ENCODE measurements at regions of chr14 and their contacts with region 1.

Region 1: GRCh38 chr14:22556990-22557623 is 31.9 kb downstream of the DAD1 start:
- DNase-seq: peak; percentile 96
- ATAC-seq: peak; percentile 10
- H3K4me3 Mint-ChIP-seq: peak overlapping the region; percentile 76
- H3K27ac Mint-ChIP-seq: peak overlapping the region; percentile 100
- H3K4me1 Mint-ChIP-seq: peaks cover 86% of the 10 kb centered on the region
- H3K27me3 Mint-ChIP-seq: no peaks in the 10 kb centered on the region

Region 2: DNA sequence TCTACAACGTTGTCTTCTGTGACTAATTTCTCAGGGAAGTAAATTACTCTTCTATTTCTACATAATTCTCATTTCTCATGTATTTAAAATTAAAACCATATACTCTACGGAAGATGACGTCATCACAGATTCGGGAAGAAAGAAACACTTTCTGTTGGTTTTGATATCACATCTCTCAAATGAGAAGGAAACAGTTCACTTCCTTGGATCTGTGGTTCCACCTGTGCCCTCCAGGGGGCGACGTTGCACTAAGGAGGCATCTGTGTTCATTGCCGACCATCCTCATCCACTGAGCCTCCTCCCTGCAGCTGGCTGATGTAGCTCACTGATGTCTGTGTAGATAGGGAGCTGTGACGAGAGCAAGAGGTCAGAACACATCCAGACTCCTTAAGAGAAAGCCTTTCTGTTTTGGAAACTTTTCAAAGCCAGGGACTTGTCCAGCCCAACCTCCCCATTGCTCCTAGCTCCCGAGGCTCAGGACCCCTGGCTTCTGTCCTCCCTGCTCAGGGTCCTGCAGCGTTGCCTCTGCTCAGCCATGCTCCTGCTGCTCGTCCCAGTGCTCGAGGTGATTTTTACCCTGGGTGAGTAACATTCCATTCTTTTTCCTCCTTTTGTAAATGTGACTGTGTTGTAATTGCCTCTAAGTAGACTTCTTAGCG is 710.8 kb before region 1 on chr14:
- CTCF ChIA-PET with region 1: interaction called, 4 read pairs
- POLR2A ChIA-PET with region 1: interaction called, 4 read pairs
- intact Hi-C with region 1: loop called (anchors 1 to 2 kb)
- DNase-seq: peak; percentile 86
- ATAC-seq: peak; percentile 81
- H3K4me3 Mint-ChIP-seq: peak overlapping the region; percentile 84
- H3K27ac Mint-ChIP-seq: peak overlapping the region; percentile 87
- H3K4me1 Mint-ChIP-seq: peaks cover 12% of the 10 kb centered on the region
- H3K27me3 Mint-ChIP-seq: peaks cover 13% of the 10 kb centered on the region

Region 3: GRCh38 chr14:21997300-21997699 is 559.8 kb before region 1 on chr14:
- CTCF ChIA-PET with region 1: interaction called, 5 read pairs
- POLR2A ChIA-PET with region 1: interaction called, 6 read pairs
- intact Hi-C with region 1: loop called in 1 of 2 experiments (anchors 10 kb)
- DNase-seq: peak; percentile 54
- ATAC-seq: peak; percentile 93
- H3K4me3 Mint-ChIP-seq: peak overlapping the region; percentile 85
- H3K27ac Mint-ChIP-seq: peak overlapping the region; percentile 96
- H3K4me1 Mint-ChIP-seq: peaks cover 27% of the 10 kb centered on the region
- H3K27me3 Mint-ChIP-seq: no peaks in the 10 kb centered on the region

Region 4: DNA sequence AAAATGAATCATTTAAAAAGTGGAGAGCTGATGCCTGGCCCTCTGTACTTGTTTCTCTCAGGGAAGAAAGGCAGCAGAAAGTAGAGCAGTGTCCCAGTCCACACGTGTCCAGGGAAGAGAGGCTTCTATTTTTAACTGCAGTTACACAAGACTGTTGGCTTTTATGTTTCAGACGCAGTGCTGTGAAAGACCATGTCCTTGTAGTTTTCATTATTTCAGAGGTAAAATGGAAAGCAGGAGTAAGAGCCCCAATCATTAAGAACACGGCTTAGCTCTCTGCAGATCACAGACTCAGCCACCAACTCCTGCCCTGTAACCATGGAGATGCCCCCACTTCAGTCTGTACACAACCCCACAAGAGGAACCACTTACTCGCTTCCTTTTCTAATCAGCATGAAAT is 304.4 kb before region 1 on chr14:
- CTCF ChIA-PET with region 1: no interaction called
- POLR2A ChIA-PET with region 1: no interaction called
- intact Hi-C with region 1: no loop called
- DNase-seq: no peak
- ATAC-seq: no peak
- H3K4me3 Mint-ChIP-seq: no peak overlapping the region
- H3K27ac Mint-ChIP-seq: no peak overlapping the region
- H3K4me1 Mint-ChIP-seq: no peaks in the 10 kb centered on the region
- H3K27me3 Mint-ChIP-seq: no peaks in the 10 kb centered on the region

Region 5: DNA sequence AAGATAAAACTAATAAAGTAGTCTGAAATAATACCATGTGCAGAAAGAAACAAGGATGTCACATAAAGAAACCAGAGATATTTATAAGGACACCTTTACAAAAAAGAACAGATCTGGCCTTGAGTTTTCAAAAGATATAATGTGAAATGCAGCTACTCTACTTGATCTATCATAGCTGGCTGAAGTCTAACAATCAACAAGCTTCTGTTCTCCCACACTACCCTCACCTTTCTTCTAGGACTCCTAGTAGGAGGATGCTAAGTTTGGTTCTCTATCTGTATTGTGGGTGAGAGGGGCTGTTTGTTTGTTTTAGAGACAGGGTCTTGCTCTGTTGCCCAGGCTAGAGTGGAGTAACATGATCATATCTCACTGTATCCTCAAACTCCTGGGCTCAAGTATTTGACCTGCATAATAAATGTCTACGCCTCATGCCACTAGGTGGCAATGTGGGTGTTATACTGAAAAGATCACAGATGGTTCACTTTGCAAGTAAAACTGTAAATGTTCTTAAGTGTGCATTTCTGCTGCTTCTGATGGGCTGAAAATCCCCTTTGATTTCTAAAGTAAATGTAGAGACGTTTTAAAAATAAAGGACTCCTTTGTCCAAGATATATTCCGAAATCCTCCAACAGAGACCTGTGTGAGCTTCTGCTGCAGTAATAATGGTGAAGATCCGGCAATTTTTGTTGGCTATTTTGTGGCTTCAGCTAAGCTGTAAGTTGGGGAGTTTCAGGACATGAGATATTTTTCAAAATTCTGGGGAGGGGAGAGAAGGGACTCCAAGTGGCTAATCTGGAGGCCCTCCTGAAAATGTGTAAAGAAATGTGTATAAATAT is 237.4 kb before region 1 on chr14:
- CTCF ChIA-PET with region 1: no interaction called
- POLR2A ChIA-PET with region 1: no interaction called
- intact Hi-C with region 1: loop called (anchors 5 to 10 kb)
- DNase-seq: peak; percentile 11
- ATAC-seq: peak; percentile 19
- H3K4me3 Mint-ChIP-seq: peak overlapping the region; percentile 63
- H3K27ac Mint-ChIP-seq: peak overlapping the region; percentile 74
- H3K4me1 Mint-ChIP-seq: no peaks in the 10 kb centered on the region
- H3K27me3 Mint-ChIP-seq: no peaks in the 10 kb centered on the region

Region 6: DNA sequence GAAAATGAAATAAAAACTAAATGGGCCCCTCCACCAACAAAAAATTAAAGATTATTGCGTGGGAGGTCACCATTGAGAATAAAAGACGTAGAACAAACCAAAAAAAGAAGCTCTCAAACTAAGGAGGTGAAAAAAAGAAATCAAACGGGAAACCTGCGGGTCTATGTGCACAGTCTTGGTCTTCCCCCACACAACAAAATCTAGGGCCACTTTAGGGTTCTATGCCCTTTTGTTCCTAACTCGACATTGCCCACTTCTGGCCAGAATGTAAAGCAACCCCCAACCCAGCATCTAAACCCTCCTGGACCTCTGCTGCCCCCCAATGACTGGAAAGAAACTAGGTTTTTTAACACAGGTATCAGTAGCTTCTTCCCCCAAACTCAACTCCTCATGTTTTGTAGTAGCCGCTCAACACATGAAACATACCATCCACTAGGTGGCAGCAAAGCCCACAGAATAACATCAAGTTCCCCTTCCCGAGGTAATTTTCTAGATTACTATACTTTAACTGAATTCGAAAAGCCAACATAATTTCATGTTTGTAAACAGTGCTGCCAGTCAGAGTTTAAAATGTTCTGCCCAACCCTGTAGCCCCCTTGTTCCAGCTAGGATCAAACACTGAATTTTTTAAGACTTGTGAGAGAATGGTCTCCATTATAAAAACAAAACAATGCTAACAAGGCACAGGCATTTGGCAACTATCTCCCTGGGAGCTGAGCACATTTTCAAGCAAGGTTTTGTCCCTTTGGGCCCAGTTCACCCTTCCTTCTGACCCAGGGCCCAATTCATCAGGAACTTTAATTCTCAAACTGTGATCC is 13.2 kb after region 1 on chr14:
- CTCF ChIA-PET with region 1: interaction called, 195 read pairs
- POLR2A ChIA-PET with region 1: interaction called, 34 read pairs
- intact Hi-C with region 1: loop called (anchors 1 kb)
- DNase-seq: peak; percentile 89
- ATAC-seq: peak; percentile 80
- H3K4me3 Mint-ChIP-seq: peak overlapping the region; percentile 90
- H3K27ac Mint-ChIP-seq: peak overlapping the region; percentile 100
- H3K4me1 Mint-ChIP-seq: peaks cover 79% of the 10 kb centered on the region
- H3K27me3 Mint-ChIP-seq: no peaks in the 10 kb centered on the region

Region 7: GRCh38 chr14:22822571-22823098 is 265.5 kb after region 1 on chr14:
- CTCF ChIA-PET with region 1: interaction called, 4 read pairs
- POLR2A ChIA-PET with region 1: interaction called, 9 read pairs
- intact Hi-C with region 1: loop called in 1 of 2 experiments (anchors 1 kb)
- DNase-seq: peak; percentile 80
- ATAC-seq: peak; percentile 75
- H3K4me3 Mint-ChIP-seq: peak overlapping the region; percentile 55
- H3K27ac Mint-ChIP-seq: peak overlapping the region; percentile 25
- H3K4me1 Mint-ChIP-seq: peaks cover 27% of the 10 kb centered on the region
- H3K27me3 Mint-ChIP-seq: peaks cover 5% of the 10 kb centered on the region

Region 8: GRCh38 chr14:22986508-22987054 is 429.5 kb after region 1 on chr14:
- CTCF ChIA-PET with region 1: interaction called, 5 read pairs
- POLR2A ChIA-PET with region 1: no interaction called
- intact Hi-C with region 1: loop called (anchors 1 kb)
- DNase-seq: peak; percentile 95
- ATAC-seq: peak; percentile 61
- H3K4me3 Mint-ChIP-seq: no peak overlapping the region
- H3K27ac Mint-ChIP-seq: no peak overlapping the region
- H3K4me1 Mint-ChIP-seq: no peaks in the 10 kb centered on the region
- H3K27me3 Mint-ChIP-seq: no peaks in the 10 kb centered on the region

Measured in activated CD4-positive, alpha-beta T cell treated with anti-CD3 and anti-CD28 coated beads for 36 hours (primary cell).